Endothelial cell of umbilical vein (primary cell): ENCODE measurements at regions of chr5 and their contacts with region 1.

Region 1: GRCh38 chr5:144142139-144142823 is 28.2 kb downstream of the YIPF5 start:
- DNase-seq: peak; percentile 68
- H3K4me3 ChIP-seq: no peak overlapping the region
- H3K27ac ChIP-seq: no peak overlapping the region
- H3K4me1 ChIP-seq: peaks cover 29% of the 10 kb centered on the region
- H3K27me3 ChIP-seq: no peaks in the 10 kb centered on the region
- CTCF ChIP-seq: peak; percentile 55 to 71
- POLR2A ChIP-seq: no peak

Region 2: GRCh38 chr5:143824851-143825720 is 317.2 kb before region 1 on chr5:
- CTCF ChIA-PET with region 1: interaction called, 32 read pairs
- POLR2A ChIA-PET with region 1: no interaction called
- dilution Hi-C with region 1: no loop called
- intact Hi-C with region 1: loop called (anchors 1 kb)
- DNase-seq: peak; percentile 83
- H3K4me3 ChIP-seq: no peak overlapping the region
- H3K27ac ChIP-seq: no peak overlapping the region
- H3K4me1 ChIP-seq: no peaks in the 10 kb centered on the region
- H3K27me3 ChIP-seq: peaks cover 0 to 2% of the 10 kb centered on the region in 2 experiments
- CTCF ChIP-seq: peak; percentile 84
- POLR2A ChIP-seq: no peak

Region 3: DNA sequence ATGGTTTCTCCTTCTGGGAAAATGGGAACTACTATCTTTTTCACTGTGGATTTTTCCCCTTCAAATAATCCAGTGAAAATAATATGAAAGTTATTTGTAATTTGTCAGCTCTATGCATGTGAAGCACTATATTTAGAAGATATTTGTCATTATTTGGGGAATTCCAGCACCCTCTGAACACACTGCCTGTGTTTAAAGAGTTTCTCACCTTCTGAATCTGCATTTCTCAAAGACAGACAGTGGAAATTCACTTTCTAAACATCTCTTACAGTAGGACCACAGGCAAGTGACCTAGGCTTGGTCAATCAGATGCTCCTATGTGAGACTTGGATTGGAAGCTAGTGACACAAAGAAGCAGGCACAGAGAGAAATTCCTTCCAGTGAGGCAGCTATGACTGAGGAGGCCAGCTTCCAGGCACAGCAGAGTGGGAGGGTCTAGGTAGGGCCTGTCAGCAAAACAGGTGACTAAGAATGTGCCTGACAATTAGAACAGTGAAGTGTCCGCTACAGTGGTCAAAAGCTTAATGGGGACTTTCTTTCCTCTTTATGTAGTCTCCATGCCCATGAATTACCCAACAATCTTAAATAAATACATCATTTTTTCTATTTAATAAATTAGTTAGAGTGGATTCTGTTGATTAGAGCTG is 163.1 kb before region 1 on chr5:
- CTCF ChIA-PET with region 1: interaction called, 10 read pairs
- POLR2A ChIA-PET with region 1: no interaction called
- dilution Hi-C with region 1: no loop called
- intact Hi-C with region 1: no loop called
- DNase-seq: no peak
- H3K4me3 ChIP-seq: no peak overlapping the region
- H3K27ac ChIP-seq: no peak overlapping the region
- H3K4me1 ChIP-seq: peaks cover 9% of the 10 kb centered on the region
- H3K27me3 ChIP-seq: no peaks in the 10 kb centered on the region
- CTCF ChIP-seq: no peak
- POLR2A ChIP-seq: no peak

Region 4: DNA sequence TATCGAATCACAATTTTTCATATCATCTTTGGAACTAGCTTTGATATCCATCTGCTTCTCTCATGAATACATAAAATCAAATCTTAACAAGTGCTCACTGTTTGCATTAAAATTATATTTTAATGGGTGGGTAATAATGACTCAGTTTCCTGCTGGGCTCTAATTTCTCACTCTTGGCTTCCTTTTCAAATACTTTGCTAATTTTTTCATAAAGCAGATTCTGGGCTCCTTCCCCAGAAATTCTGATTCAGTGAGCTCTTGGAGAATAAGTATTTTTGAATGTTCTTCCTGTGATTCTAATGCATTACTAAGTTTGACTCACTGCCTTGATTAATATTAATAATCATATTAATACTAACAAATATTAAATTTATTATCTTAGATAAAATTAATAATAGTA is 20.7 kb before region 1 on chr5:
- CTCF ChIA-PET with region 1: interaction called, 24 read pairs
- POLR2A ChIA-PET with region 1: no interaction called
- dilution Hi-C with region 1: no loop called
- intact Hi-C with region 1: no loop called
- DNase-seq: peak; percentile 87
- H3K4me3 ChIP-seq: no peak overlapping the region
- H3K27ac ChIP-seq: no peak overlapping the region
- H3K4me1 ChIP-seq: peaks cover 14% of the 10 kb centered on the region
- H3K27me3 ChIP-seq: no peaks in the 10 kb centered on the region
- CTCF ChIP-seq: no peak
- POLR2A ChIP-seq: no peak

Region 5: DNA sequence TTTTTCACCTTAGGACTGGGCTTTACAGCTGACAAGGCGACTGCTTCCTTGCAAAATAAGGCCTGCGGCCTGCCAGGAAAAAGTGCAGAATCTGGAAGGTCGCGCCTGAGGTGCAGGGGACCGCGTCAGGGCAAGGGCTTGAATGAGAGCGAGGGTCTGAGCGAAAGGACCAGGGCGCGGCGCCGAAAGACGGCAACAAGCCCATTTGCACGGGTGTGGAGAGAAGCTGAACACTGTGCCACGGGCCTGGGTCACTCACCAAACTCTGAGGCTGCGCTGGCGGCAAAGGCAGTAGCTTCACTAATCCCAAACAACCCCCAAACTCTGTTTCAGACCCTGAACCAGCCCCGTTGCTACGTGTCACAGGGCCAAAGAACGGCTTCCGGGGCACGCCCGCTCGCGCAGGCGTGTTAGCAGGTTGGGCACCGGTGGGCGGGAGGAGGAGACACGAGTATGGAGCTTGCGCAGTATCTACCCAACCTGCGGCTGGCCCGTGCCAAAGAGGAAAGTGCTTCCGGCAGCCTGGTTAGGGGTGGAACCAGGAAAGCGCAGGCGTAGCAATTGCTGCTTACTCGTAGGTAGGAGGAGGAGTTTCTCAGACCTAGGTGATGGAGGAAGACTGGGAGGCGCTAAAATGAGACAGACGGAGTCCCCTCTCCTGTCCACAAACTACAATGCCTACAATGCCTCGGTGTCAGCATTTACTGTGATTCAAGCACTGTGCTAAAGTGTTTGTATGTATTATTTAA is 28.2 kb after region 1 on chr5 and contains the starts of genes KCTD16 and YIPF5:
- CTCF ChIA-PET with region 1: interaction called, 10 read pairs
- POLR2A ChIA-PET with region 1: no interaction called
- dilution Hi-C with region 1: no loop called
- intact Hi-C with region 1: loop called (anchors 1 kb)
- DNase-seq: peak; percentile 97
- H3K4me3 ChIP-seq: peak within 1 kb of the TSS; percentile 79 to 92 (median 92)
- H3K27ac ChIP-seq: peak within 1 kb of the TSS; percentile 83
- H3K4me1 ChIP-seq: peaks cover 23% of the 10 kb centered on the region
- H3K27me3 ChIP-seq: no peaks in the 10 kb centered on the region
- CTCF ChIP-seq: no peak
- POLR2A ChIP-seq: peak; percentile 78
- total RNA-seq, gene KCTD16: 0.30 and 0.49 TPM in 2 replicates
- total RNA-seq, gene YIPF5: 73.7 and 90.0 TPM in 2 replicates

Region 6: DNA sequence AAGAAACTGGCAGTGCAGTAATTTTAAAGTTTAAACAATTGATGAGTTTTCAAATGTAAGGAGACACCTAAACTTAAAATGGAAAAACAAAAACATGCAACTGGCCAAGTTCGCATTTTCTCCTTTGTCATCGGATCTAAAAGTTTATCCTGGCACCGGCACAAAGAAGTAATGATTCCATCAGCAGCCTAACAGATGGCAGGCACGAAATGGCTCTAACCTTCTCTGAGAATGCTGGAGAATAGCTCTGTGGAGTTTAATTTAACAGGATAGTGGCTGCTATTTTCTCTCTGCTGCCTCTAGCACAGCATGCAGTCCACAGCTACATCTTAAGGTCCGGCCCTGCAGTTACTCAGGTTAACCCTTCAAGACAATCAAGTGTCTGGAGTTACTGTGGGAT is 1610.7 kb after region 1 on chr5:
- CTCF ChIA-PET with region 1: no interaction called
- POLR2A ChIA-PET with region 1: no interaction called
- dilution Hi-C with region 1: no loop called
- intact Hi-C with region 1: no loop called
- DNase-seq: peak; percentile 76
- H3K4me3 ChIP-seq: peak overlapping the region in 1 of 3 experiments; percentile 27
- H3K27ac ChIP-seq: peak overlapping the region; percentile 51
- H3K4me1 ChIP-seq: peaks cover 27% of the 10 kb centered on the region
- H3K27me3 ChIP-seq: no peaks in the 10 kb centered on the region
- CTCF ChIP-seq: no peak
- POLR2A ChIP-seq: no peak